SK-N-SH (cell line): ENCODE measurements at regions of chr10 and their contacts with region 1.

Region 1: DNA sequence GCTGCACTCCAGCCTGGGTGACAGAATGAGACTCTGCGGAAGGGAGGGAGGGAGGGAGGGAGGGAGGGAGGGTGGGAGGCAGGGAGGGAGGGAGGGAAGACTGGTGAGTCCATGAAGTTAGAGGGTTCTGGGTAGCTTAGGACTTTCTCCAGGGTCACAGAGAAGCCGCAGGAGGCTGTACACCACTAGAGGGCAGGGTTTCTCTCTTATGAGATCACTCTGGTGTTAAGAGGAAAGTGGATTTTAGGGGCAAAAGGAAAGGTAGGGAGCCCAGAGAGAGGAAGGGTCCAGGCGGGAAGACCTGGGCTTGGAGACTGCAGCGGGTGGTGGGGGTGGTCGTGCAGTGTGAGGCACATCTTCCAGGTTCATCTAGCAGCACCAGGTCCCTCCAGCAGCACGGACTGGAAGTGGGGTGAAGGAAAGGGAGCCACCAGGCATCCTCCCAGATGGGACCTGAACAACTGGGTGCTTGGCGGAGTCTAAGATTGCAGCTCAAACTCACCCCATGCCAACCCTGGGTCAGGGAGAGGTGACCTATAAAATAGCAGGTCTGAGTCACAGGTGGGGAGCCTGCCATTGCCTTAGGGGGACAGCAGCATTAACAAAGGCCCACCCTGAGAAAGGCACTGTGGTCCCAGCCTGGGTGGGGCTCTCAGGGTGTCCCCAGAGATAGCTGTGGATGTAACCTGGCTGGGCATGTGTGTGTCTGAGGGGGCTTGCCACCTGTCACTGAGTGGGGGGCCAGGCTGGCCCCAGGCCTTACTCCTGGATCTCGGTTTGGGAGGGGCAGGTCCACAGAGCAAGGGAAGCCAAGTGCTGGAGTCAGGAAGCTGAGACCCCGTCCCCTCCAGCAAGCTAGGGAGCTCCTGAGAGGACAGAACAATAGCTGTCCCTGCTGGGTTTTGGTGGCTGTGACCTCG is 48.5 kb upstream of the SLC29A3 start:
- DNase-seq: peak; percentile 72
- H3K4me3 ChIP-seq: no peak overlapping the region; a peak in 1 of 4 replicates
- H3K27ac ChIP-seq: peak overlapping the region; percentile 68 to 96; a peak in 3 of 4 replicates
- H3K4me1 ChIP-seq: peaks cover 54 to 90% of the 10 kb centered on the region in 2 experiments
- H3K27me3 ChIP-seq: no peaks in the 10 kb centered on the region
- CTCF ChIP-seq: peak; percentile 65
- EP300 ChIP-seq: no peak
- RAD21 ChIP-seq: peak; percentile 77

Region 2: DNA sequence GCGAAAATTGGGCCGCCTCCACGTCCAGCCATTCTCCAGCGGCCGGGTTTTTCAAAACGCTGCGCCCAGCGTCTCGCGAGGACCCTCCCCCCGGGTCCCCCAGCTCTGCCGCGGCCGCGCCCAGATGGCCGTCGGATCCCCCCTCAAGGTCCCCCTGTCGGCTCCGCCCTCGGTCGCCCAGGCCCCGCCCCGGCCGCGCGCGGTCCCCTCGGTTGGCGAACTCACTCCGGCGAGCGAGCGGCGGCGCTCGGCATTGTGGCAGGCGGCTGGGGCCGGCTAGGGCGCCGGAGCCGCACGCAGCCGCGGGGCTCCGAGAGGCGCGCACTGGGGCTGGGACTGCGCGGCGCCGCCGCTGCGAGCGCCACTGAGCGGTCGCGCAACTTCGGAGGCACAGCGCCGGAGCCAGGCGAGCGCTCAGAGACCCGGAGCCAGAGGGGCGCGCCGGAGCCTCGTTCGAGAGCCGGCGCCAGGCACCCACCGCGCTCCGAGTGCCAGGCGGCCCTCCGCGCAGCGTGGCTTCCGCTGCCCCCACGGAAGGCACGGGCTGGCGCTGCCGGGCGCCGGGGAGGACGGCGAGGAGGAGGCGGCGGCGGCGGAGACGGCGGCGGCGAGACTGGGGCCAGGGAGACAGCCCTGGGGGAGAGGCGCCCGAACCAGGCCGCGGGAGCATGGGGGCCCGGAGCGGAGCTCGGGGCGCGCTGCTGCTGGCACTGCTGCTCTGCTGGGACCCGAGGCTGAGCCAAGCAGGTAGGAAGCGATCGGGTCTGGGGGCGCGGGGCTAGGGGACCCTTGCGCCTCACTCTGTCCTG is 58.0 kb before region 1 on chr10 and contains the start of gene UNC5B:
- CTCF ChIA-PET with region 1: interaction called, 107 read pairs
- POLR2A ChIA-PET with region 1: interaction called, 6 read pairs
- DNase-seq: peak; percentile 97
- H3K4me3 ChIP-seq: peak within 1 kb of the TSS; percentile 90 to 98
- H3K27ac ChIP-seq: peak within 1 kb of the TSS; percentile 90 to 91
- H3K4me1 ChIP-seq: peaks cover 17 to 57% of the 10 kb centered on the region in 2 experiments; a peak in 2 of 4 replicates
- H3K27me3 ChIP-seq: peaks cover 7% of the 10 kb centered on the region; the same call in 1 of the 2 replicates
- CTCF ChIP-seq: no peak; the same call in 1 of the 2 replicates
- EP300 ChIP-seq: 0 out of 4 replicates have a peak, but pooled peaks of 1 of the 2 experiments have one; percentile 23
- RAD21 ChIP-seq: peak; percentile 12
- polyA plus RNA-seq, gene UNC5B: 12.2 and 13.8 TPM in 2 replicates

Region 3: GRCh38 chr10:71234970-71235685 is 35.4 kb before region 1 on chr10:
- CTCF ChIA-PET with region 1: interaction called, 139 read pairs
- POLR2A ChIA-PET with region 1: interaction called, 3 read pairs
- DNase-seq: peak; percentile 83
- H3K4me3 ChIP-seq: peak overlapping the region; percentile 6 to 46; a peak in 3 of 4 replicates
- H3K27ac ChIP-seq: peak overlapping the region; percentile 94 to 100
- H3K4me1 ChIP-seq: peaks cover 82 to 97% of the 10 kb centered on the region in 2 experiments
- H3K27me3 ChIP-seq: no peaks in the 10 kb centered on the region
- CTCF ChIP-seq: no peak
- EP300 ChIP-seq: peak; percentile 84 to 98
- RAD21 ChIP-seq: peak; percentile 38; the same call in 1 of the 2 replicates

Region 4: DNA sequence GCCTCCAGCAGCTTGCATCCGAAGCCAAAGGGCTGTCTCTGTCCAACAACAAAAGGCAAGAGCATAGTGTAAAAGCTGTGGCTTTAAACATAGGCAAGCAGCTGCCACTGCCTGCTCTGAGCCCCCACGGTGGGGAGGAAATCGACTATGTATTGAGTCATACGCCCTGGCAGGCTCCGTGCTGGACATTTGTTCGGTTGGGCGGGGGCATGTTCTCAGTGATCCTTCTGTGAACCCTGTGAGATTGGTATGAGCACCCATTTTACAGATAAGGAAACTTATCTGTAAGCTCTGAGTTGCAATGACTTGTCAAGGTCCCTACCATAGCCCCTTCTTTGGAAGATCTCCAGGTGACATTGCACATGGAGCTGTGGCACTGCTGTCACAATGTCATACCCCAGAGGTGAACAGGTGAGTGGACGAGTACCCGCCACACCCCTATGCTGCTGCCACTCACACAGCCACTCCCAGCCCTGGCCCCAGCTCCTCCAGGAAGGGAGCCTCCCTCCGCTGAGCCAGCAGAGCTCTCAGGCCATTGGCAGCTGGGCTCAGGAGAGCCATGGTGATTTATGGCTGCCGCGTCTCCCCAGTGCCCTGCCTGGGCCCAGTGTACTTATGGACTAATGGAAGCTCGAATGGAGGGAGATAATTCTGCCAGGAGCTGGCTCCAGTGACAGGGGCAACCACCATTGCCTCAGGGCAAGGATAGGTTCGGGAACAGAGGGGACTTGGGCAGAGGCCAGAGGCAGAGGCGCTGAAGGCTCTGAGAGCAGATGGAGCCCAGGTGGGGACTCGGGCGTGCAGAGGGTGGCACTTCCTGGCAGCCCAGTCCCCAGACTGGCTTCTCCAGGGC is 14.5 kb before region 1 on chr10:
- CTCF ChIA-PET with region 1: interaction called, 139 read pairs
- POLR2A ChIA-PET with region 1: interaction called, 24 read pairs
- DNase-seq: peak; percentile 74
- H3K4me3 ChIP-seq: no peak overlapping the region
- H3K27ac ChIP-seq: peak overlapping the region; percentile 53 to 100
- H3K4me1 ChIP-seq: peaks cover 56 to 97% of the 10 kb centered on the region in 2 experiments
- H3K27me3 ChIP-seq: no peaks in the 10 kb centered on the region
- CTCF ChIP-seq: no peak
- EP300 ChIP-seq: peak in 1 of 2 experiments; percentile 81; a peak in 3 of 4 replicates
- RAD21 ChIP-seq: 0 out of 2 replicates have a peak, but pooled peaks have one; percentile 20

Region 5: DNA sequence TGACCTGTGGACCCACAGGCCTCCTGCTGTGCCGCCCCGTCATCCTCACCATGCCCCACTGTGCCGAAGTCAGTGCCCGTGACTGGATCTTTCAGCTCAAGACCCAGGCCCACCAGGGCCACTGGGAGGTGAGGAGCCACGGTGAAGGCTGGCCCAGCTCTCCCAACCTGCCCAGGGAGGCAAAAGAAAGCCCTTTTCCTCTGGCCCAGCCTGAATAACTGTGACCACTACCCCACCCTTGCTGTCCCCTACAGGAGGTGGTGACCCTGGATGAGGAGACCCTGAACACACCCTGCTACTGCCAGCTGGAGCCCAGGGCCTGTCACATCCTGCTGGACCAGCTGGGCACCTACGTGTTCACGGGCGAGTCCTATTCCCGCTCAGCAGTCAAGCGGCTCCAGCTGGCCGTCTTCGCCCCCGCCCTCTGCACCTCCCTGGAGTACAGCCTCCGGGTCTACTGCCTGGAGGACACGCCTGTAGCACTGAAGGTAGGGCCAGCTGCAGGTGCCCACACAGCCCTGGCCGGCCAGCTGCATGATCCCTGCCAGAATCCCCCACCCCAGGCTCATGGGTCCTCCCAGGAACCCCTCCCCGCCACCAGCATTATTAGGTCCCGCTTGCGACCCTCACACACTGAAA is 23.0 kb after region 1 on chr10:
- CTCF ChIA-PET with region 1: interaction called, 16 read pairs
- POLR2A ChIA-PET with region 1: no interaction called
- DNase-seq: no peak
- H3K4me3 ChIP-seq: no peak overlapping the region
- H3K27ac ChIP-seq: peak overlapping the region in 1 of 2 experiments; percentile 43; a peak in 1 of 4 replicates
- H3K4me1 ChIP-seq: peaks cover 0 to 15% of the 10 kb centered on the region in 2 experiments; a peak in 1 of 4 replicates
- H3K27me3 ChIP-seq: no peaks in the 10 kb centered on the region
- CTCF ChIP-seq: no peak
- EP300 ChIP-seq: no peak
- RAD21 ChIP-seq: no peak